ENCODE measurements at regions of chr16 and their contacts with region 1.

Region 1: DNA sequence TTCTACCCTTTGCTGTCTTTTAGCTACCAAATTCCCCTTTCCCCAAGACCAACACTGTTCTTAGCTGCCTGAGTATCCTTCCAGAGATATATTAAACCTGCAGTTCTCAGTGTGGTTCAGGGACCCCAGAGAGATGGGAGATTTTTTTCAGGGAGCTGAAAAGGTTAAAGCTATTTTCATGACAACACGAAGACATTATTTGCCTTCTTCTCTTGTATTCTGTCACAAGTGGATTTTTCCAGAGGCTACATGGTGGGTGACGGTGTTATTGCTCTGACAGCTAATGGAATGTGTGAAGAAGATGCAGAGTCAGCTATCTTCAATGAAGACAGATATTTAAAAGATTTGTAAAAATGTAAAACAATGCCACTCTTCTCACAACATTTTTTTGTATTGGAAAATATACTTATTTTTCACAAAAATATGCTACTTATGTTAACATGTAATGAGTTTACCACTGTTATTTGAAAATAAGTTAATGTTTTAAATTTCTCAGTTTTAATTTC is 69.0 kb downstream of the CFDP1 start:
- DNase-seq: no peak
- ATAC-seq: no peak
- H3K4me3 ChIP-seq: no peak overlapping the region
- H3K27ac ChIP-seq: no peak overlapping the region
- H3K4me1 ChIP-seq: no peaks in the 10 kb centered on the region
- H3K27me3 ChIP-seq: no peaks in the 10 kb centered on the region
- CTCF ChIP-seq: no peak
- POLR2A ChIP-seq: no peak

Region 2: GRCh38 chr16:73888840-73889490 is 1475.4 kb before region 1 on chr16:
- in situ Hi-C with region 1: no loop called
- intact Hi-C with region 1: no loop called
- DNase-seq: no peak
- ATAC-seq: no peak
- H3K4me3 ChIP-seq: no peak overlapping the region
- H3K27ac ChIP-seq: no peak overlapping the region
- H3K4me1 ChIP-seq: no peaks in the 10 kb centered on the region
- H3K27me3 ChIP-seq: peaks cover 0 to 17% (median 2%) of the 10 kb centered on the region in 3 donors
- CTCF ChIP-seq: no peak
- POLR2A ChIP-seq: no peak

Region 3: GRCh38 chr16:75294773-75295459 is 69.4 kb before region 1 on chr16:
- in situ Hi-C with region 1: no loop called
- intact Hi-C with region 1: no loop called
- DNase-seq: no peak
- ATAC-seq: no peak
- H3K4me3 ChIP-seq: no peak overlapping the region
- H3K27ac ChIP-seq: no peak overlapping the region
- H3K4me1 ChIP-seq: no peaks in the 10 kb centered on the region
- H3K27me3 ChIP-seq: no peaks in the 10 kb centered on the region
- CTCF ChIP-seq: no peak
- POLR2A ChIP-seq: no peak

Region 4: GRCh38 chr16:75305364-75306098 is 58.8 kb before region 1 on chr16:
- in situ Hi-C with region 1: no loop called
- intact Hi-C with region 1: no loop called
- DNase-seq: peak; percentile 87 to 95
- ATAC-seq: peak; percentile 97 to 98
- H3K4me3 ChIP-seq: peak overlapping the region in 3 of 4 donors; percentile 4 to 21 (median 12)
- H3K27ac ChIP-seq: peak overlapping the region; percentile 86 to 91 (median 90)
- H3K4me1 ChIP-seq: peaks cover 26 to 27% of the 10 kb centered on the region in 2 donors
- H3K27me3 ChIP-seq: no peaks in the 10 kb centered on the region
- CTCF ChIP-seq: no peak
- POLR2A ChIP-seq: peak; percentile 61 to 73

Region 5: GRCh38 chr16:75402821-75403475 is 38.6 kb after region 1 on chr16:
- in situ Hi-C with region 1: no loop called
- intact Hi-C with region 1: loop called (anchors 1 kb)
- DNase-seq: no peak
- ATAC-seq: peak in 1 of 2 donors; percentile 45
- H3K4me3 ChIP-seq: no peak overlapping the region
- H3K27ac ChIP-seq: peak overlapping the region in 2 of 4 donors; percentile 52 to 58
- H3K4me1 ChIP-seq: peaks cover 14 to 16% of the 10 kb centered on the region in 2 donors
- H3K27me3 ChIP-seq: no peaks in the 10 kb centered on the region
- CTCF ChIP-seq: peak; percentile 39 to 70 (median 50)
- POLR2A ChIP-seq: no peak